IMR-90 (cell line): ENCODE measurements at regions of chr3 and their contacts with region 1.

Region 1: GRCh38 chr3:55461896-55462295 is 25.2 kb downstream of the WNT5A start:
- DNase-seq: peak; percentile 89
- ATAC-seq: peak; percentile 19; the same call in 1 of the 2 replicates
- H3K4me3 ChIP-seq: no peak overlapping the region
- H3K27ac ChIP-seq: no peak overlapping the region
- H3K4me1 ChIP-seq: peaks cover 3% of the 10 kb centered on the region
- H3K27me3 ChIP-seq: no peaks in the 10 kb centered on the region
- CTCF ChIP-seq: no peak
- POLR2A ChIP-seq: no peak
- RAD21 ChIP-seq: no peak

Region 2: DNA sequence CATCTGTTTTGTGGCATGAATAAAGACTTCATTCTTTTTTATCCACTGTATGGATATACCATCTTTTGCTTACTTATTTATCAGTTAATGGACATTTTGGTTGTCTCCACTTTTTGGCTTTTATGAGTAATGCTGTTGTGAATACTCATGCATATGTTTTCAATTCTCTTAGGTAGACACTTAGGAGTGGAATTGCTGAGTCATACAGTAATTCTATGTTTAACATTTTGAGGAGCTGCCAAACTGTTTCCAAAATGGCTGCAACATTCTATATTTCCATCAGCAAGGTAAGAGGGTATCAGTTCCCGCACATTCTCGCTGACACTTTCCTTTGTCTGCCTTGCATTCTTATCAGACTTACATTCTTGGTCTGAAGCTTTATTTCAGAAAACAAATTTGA is 165.9 kb before region 1 on chr3:
- CTCF ChIA-PET with region 1: no interaction called
- POLR2A ChIA-PET with region 1: no interaction called
- dilution Hi-C with region 1: no loop called
- in situ Hi-C with region 1: no loop called
- intact Hi-C with region 1: loop called (anchors 5 kb)
- DNase-seq: peak; percentile 80
- ATAC-seq: peak; percentile 35; the same call in 1 of the 2 replicates
- H3K4me3 ChIP-seq: no peak overlapping the region
- H3K27ac ChIP-seq: 0 out of 2 replicates have a peak overlapping the region, but pooled peaks have one; percentile 29
- H3K4me1 ChIP-seq: peaks cover 6% of the 10 kb centered on the region
- H3K27me3 ChIP-seq: no peaks in the 10 kb centered on the region
- CTCF ChIP-seq: no peak
- POLR2A ChIP-seq: no peak
- RAD21 ChIP-seq: no peak